ENCODE measurements at regions of chr3 and their contacts with region 1.

Region 1: DNA sequence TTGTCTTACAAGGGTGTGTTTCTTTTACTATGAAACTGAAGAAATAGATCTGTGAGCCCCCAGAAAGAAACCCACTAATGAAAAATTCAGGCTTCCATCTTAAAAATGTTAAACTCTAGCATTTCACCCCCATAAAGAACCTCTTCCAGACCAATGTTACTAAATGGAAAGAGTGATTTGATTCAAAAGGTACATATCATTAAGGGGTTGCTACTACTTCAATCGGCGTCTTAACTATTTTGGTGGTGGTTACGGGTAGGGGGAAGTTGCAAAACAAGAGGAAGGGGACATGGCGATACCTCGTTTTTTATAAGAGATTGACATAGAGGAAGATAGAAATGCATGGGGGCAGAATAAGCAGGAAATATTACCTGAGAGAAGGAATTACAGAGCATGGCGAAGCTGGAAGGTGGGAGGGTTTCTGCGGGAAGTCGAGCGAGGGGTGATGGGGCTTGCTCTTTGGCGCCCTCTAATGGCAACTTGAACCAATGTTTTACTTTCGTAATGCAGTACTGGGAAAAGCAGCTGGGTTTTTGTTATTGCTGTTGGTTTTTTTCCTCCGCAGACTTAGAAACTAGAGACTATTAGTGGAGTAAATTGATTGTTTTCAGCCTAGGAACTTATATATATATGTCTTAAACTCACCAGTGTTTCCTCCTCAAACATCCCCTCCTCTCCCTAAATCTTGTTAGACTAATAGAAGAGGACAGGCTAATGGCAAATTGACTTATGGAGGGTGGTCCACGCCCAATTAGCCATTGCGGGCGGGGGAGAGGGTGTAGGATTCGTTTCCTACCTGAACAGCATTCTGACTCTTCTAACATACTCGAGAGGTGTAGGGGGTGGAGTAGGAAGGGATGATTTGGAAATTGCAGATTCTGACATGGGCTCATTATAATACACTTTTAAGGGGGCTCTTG is 11.3 kb upstream of the SOX2 start:
- DNase-seq: peak in 8 of 10 donors; percentile 62 to 96 (median 78)

Region 2: DNA sequence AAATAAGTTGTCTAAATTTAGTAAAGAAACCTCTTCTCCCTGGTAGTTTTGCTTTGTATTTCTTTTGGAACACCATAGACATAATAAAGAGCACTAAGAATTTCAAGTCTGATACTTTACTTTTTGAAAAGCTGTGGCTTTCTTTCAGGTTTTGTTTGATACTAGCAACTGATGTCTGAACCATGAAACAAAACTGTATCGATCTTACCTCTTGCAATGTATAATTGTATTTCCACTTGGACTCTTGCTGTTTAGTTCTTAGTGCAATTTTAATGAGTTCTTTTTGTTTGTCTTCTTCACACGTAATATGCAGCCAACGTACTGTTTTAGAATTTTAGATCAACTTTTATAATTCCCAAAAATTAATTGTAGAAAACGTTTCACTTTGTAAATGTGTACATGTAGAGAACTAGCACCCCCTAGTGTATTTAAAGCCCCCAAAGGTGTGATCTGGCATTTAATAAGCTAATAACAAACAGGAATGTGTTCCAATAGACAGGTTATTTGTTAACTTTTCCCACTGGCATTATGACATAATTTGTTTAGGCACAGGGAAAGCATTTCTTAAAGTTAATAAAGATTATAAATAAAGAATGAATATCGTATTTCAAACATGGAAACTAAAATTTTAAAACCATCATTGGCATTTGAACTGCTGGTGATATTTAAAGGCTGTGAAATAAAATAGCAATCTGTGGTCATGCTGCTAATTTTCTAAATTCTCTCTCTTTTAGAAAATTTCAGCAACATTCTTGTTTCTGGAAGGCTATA is 421.8 kb before region 1 on chr3:
- intact Hi-C with region 1: loop called (anchors 5 kb)
- DNase-seq: no peak

Region 3: GRCh38 chr3:181326637-181327223 is 373.7 kb before region 1 on chr3:
- intact Hi-C with region 1: loop called (anchors 2 kb)
- DNase-seq: no peak

Region 4: DNA sequence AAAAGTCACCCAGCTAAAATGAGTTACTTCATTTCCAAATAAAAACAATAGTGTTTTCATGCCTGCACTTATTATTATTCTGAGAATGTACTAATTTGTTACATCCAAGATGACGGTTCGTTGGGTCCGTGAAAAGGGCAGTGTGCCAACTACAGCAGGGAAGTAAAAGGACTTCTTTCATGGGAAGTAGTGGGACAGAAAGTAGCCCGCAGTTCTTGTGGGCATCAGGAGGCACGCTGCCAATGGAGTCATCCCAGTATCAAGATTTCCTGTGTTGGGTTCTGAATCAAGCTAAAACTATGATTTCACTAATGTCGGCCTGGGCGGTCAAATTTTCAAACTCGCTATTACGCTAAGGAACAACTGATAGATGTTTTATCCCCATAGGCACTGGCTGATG is 243.2 kb before region 1 on chr3:
- intact Hi-C with region 1: loop called (anchors 1 kb)
- DNase-seq: peak; percentile 69 to 97 (median 88)

Region 5: DNA sequence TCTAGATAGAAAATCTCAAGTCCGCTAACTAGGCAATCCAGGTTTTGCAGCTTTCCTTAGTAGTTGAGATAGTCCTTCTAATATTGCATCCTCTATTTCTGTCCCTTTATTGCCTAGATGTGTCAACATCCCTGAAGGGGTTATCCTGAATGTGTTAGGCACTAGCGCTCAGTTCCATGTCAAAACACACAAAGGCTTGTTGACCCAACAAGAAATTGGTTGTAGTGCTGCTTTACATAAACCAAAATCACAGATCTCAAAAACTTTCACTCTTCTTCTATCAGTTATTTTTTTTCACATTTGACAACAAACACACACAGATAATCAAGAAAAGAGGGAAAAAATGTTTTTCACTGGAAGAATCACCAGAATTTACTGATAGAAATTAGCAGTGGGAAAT is 40.1 kb before region 1 on chr3:
- intact Hi-C with region 1: no loop called
- DNase-seq: no peak

Region 6: DNA sequence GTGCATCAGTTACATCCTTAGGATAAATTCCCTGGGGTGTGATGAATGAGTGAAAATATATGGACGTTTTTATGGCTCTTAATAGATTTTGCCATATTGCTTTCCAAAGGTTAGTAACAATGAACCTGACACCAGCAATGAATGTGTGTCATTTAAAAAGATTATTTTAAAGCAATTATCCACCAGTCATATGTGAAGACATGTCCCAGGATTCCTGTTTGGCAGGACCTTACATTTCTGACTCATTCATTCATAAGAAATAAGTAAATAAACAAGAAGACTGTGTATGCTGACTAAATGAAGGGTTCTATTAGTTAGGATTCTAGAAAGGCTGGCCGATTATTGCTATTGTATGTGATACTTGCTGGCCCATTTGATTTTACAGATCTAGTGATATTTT is 212.8 kb after region 1 on chr3:
- intact Hi-C with region 1: no loop called
- DNase-seq: no peak

Measured in posterior cingulate gyrus (tissue), 11 donors.